Psoas muscle (tissue), 8 donors: ENCODE measurements at regions of chr6 and their contacts with region 1.

Region 1: DNA sequence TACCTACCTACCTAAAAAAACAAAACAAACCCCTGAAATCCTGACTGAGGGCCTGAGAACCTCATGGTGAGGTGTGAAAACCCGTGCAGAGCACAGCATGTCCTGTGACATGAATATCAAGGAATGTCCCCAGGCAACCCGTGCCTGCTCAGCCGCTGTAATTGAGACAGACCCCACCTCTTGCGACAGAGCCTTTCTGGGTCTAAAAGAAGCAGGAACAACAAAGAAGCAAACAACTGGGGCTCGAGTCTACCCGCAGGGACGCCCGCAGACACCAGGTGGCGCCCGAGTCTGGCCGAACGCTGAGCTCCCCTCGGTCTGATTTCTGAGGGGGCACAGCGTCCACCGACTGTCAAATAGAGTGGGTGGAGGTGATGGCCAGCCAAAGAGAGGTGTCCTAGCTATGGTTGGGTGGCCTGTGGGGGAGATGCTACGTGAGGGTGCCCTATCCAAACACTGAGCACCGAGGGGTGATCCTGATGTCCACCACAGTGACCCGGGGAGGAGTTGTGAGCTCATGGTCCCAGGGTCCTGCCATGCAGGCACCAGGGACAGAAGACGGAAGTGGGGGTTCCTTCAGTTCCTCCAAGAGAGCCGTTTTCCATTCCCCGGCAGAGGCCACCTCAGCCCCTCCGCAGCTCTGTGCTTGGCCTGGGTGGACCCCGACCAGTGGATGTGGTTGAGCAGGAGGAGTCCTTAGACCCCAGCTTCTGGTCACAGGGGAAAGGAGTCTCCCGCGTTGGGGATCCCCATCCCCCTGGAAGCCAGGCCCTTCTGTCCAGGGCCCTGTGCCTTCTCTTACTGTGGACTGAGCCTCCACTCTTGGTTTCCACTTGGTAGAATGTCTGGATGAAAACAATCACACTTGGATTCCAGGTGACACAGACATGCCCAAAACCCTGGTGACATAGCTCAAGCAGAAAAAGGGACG is 268.2 kb downstream of the CDC5L start:
- DNase-seq: peak; percentile 76 to 90
- ATAC-seq: peak; percentile 59 to 87 (median 74)
- H3K4me3 ChIP-seq: no peak overlapping the region
- H3K27ac ChIP-seq: no peak overlapping the region
- H3K4me1 ChIP-seq: no peaks in the 10 kb centered on the region
- H3K27me3 ChIP-seq: peaks cover 0 to 4% (median 0%) of the 10 kb centered on the region in 3 donors
- CTCF ChIP-seq: peak; percentile 88

Region 2: DNA sequence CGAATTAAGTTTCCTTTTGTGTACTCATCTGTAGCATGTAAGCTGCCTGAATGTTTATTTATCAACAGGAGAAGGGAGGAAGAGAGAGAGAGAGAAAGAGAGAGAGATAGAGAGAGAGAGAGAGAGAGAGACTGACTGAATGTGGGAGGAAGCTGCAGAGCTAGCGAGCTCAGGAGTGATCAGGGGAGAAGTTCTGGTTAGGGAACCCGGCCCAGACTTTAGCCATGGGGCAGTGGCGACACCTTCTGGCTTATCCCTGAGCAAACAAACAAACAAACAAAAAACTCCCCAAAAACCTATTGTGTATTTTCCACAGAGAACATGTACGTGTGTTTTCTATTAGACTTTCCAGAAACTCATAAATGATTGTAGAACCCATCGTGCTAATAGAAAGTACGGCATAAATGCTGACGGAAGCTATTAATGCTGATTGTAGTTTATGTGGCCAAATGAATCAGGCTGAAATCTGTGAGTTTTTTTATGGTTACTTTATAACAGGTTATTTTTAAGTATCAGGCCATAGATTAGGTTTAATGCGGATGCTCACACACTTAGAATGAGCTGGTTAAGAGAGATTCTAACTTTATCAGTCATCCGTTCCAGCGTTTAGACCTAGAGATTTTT is 1267.2 kb after region 1 on chr6:
- intact Hi-C with region 1: loop called (anchors 2 to 5 kb)
- DNase-seq: peak; percentile 59 to 79
- ATAC-seq: peak; percentile 62 to 87 (median 70)
- H3K4me3 ChIP-seq: no peak overlapping the region
- H3K27ac ChIP-seq: no peak overlapping the region
- H3K4me1 ChIP-seq: peaks cover 26% of the 10 kb centered on the region
- H3K27me3 ChIP-seq: no peaks in the 10 kb centered on the region
- CTCF ChIP-seq: peak; percentile 54